ENCODE measurements at regions of chr9 and their contacts with region 1.

Region 1: GRCh38 chr9:33446946-33447798 is at the start of gene AQP3:
- DNase-seq: peak; percentile 80
- ATAC-seq: peak; percentile 78
- H3K4me3 Mint-ChIP-seq: peak within 1 kb of the TSS; percentile 89
- H3K27ac Mint-ChIP-seq: peak within 1 kb of the TSS; percentile 91
- H3K4me1 Mint-ChIP-seq: peaks cover 51% of the 10 kb centered on the region
- H3K27me3 Mint-ChIP-seq: no peaks in the 10 kb centered on the region
- total RNA-seq, gene AQP3: 29.9 to 31.4 TPM

Region 2: DNA sequence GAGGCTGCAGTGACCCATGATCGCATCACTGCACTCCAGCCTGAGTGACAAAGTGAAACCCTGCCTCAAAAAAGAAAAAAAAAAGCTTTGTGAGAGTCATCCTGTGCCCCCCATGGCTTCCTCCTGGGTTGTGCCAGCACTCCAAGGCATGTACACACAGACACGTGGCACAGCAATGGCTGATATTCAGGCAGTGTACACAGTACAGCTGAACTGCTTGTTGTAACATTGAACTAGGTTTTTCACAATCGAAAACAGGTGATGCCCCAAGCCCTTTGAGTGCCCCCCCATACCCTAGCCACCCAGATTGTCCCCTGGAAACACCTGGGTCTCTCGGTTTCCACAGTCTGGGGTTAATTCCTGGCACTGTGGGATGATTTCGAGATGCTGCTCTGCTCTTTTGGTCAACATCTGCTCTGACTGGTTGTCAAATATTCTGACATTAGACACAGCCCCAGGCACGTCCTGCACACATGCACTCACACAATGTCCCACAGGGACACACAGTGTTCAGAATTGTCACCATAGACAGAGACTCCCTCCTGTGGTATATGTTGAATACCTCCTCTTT is 198.0 kb before region 1 on chr9:
- CTCF ChIA-PET with region 1: no interaction called
- POLR2A ChIA-PET with region 1: no interaction called
- DNase-seq: no peak
- ATAC-seq: peak; percentile 20
- H3K4me3 Mint-ChIP-seq: no peak overlapping the region
- H3K27ac Mint-ChIP-seq: peak overlapping the region; percentile 32
- H3K4me1 Mint-ChIP-seq: peaks cover 10% of the 10 kb centered on the region
- H3K27me3 Mint-ChIP-seq: no peaks in the 10 kb centered on the region

Region 3: DNA sequence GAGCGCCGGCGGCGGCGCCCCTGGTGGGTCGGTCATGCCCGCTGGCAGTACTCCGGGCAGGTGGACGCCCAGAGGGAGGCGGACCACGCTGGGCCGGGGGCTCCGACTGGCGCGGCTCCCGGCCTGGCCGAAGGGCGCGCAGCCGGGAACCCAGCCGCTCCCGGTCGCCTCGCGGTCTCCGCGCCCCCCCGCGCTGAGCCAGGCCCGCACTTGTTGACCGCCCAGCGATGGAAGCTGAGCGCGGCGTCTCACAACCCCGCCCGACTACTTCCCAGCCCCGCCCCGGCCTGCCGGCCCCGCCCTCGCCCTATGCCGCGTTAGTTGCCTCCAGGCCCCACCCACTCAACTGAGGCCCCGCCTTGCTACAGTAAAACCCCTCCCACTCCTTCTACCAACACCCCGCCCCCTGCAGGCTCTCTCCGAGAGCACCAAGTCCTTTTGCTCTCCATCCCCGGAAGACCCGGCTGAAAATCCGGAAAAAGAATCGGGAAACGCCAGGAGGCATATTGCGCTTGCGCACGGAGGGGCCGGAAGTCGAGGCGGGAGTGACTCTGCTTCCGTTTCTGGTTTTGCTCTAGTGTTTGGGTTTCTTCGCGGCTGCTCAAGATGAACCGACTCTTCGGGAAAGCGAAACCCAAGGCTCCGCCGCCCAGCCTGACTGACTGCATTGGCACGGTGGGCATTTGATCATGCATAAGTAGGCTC is 182.5 kb before region 1 on chr9 and contains the starts of genes BAG1 and CHMP5:
- CTCF ChIA-PET with region 1: no interaction called
- POLR2A ChIA-PET with region 1: no interaction called
- DNase-seq: peak; percentile 100
- ATAC-seq: peak; percentile 90
- H3K4me3 Mint-ChIP-seq: peak within 1 kb of the TSS; percentile 99
- H3K27ac Mint-ChIP-seq: peak within 1 kb of the TSS; percentile 100
- H3K4me1 Mint-ChIP-seq: peaks cover 52% of the 10 kb centered on the region
- H3K27me3 Mint-ChIP-seq: no peaks in the 10 kb centered on the region
- total RNA-seq, gene BAG1: 95.5 to 96.3 TPM
- total RNA-seq, gene CHMP5: 83.0 to 85.5 TPM

Region 4: GRCh38 chr9:33374634-33375213 is 72.4 kb before region 1 on chr9:
- CTCF ChIA-PET with region 1: interaction called, 28 read pairs
- POLR2A ChIA-PET with region 1: interaction called, 5 read pairs
- DNase-seq: peak; percentile 81
- ATAC-seq: peak; percentile 85
- H3K4me3 Mint-ChIP-seq: no peak overlapping the region
- H3K27ac Mint-ChIP-seq: peak overlapping the region; percentile 35
- H3K4me1 Mint-ChIP-seq: peaks cover 12% of the 10 kb centered on the region
- H3K27me3 Mint-ChIP-seq: no peaks in the 10 kb centered on the region

Region 5: DNA sequence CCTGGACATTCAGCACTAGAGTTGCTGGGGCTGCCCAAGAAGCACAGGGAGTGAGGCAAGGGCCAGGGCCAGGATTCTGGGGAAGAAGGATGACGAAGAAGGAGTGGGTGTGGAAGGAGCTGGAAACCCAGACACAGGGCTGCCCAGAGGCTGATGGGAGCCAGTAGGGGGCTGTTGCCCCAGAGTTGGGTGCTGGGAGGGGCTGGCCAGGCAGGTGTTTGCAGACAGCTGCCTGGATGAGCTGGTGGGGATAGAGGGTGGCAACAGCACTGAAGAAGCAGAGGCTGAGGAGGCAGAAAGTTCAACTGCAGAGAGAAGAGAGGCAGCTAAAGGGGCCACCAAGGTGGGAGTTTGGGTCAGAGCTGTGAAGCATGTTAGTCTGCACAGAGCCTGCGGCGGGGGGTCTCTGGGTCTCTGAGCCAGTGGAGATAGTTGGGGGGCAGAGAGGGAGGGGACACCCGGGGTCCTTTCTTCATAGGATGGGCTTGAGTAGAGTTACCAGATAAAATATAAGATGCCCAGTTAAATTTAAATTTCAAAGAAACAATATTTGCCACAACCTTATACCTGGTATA is 42.3 kb before region 1 on chr9:
- CTCF ChIA-PET with region 1: interaction called, 209 read pairs
- POLR2A ChIA-PET with region 1: no interaction called
- DNase-seq: no peak
- ATAC-seq: no peak
- H3K4me3 Mint-ChIP-seq: no peak overlapping the region
- H3K27ac Mint-ChIP-seq: no peak overlapping the region
- H3K4me1 Mint-ChIP-seq: peaks cover 7% of the 10 kb centered on the region
- H3K27me3 Mint-ChIP-seq: peaks cover 5% of the 10 kb centered on the region

Region 6: GRCh38 chr9:33430942-33431341 is 16.2 kb before region 1 on chr9:
- CTCF ChIA-PET with region 1: interaction called, 10 read pairs
- POLR2A ChIA-PET with region 1: interaction called, 9 read pairs
- DNase-seq: no peak
- ATAC-seq: no peak
- H3K4me3 Mint-ChIP-seq: no peak overlapping the region
- H3K27ac Mint-ChIP-seq: no peak overlapping the region
- H3K4me1 Mint-ChIP-seq: peaks cover 3% of the 10 kb centered on the region
- H3K27me3 Mint-ChIP-seq: peaks cover 2% of the 10 kb centered on the region

Region 7: GRCh38 chr9:33458444-33458843 is 11.3 kb after region 1 on chr9:
- CTCF ChIA-PET with region 1: interaction called, 141 read pairs
- POLR2A ChIA-PET with region 1: interaction called, 9 read pairs
- DNase-seq: peak; percentile 57
- ATAC-seq: peak; percentile 60
- H3K4me3 Mint-ChIP-seq: peak overlapping the region; percentile 15
- H3K27ac Mint-ChIP-seq: peak overlapping the region; percentile 87
- H3K4me1 Mint-ChIP-seq: peaks cover 51% of the 10 kb centered on the region
- H3K27me3 Mint-ChIP-seq: no peaks in the 10 kb centered on the region

Region 8: GRCh38 chr9:33466565-33467495 is 19.7 kb after region 1 on chr9:
- CTCF ChIA-PET with region 1: interaction called, 141 read pairs
- POLR2A ChIA-PET with region 1: interaction called, 12 read pairs
- DNase-seq: peak; percentile 79
- ATAC-seq: peak; percentile 71
- H3K4me3 Mint-ChIP-seq: no peak overlapping the region
- H3K27ac Mint-ChIP-seq: peak overlapping the region; percentile 25
- H3K4me1 Mint-ChIP-seq: peaks cover 7% of the 10 kb centered on the region
- H3K27me3 Mint-ChIP-seq: no peaks in the 10 kb centered on the region

Region 9: DNA sequence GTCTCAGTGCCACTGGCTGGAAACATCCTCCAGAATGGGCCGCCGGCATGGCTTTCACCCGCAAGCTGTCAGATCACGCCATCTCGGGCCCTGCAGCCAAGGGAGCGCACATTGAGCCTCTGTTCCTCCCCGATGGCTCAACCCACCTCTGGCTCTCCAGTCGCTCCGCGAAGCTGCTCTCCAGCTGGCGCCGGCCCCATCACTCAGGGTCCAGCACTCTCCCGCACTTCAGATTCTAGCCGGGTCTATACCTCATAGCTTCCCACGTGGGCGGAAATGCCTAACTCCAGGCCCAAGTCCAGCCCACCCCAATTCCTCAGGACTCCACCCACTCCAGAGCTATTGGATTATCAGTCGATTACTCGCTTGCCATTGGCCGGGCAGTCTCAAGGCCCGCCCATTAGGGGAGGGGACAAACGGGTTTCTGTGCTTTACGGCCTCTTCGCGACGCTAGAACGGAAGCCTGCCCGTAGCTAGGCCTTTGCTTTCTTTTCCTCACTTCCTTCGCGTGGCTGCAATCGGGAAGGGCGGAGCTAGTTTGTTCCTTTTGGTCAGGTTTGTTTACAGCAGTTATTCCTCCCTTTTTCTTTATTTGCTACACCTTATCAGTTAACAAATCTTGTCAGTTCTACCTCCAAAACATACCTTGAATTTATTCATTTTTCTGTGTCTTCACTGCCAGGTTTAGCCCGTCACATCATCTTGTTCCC is 26.6 kb after region 1 on chr9 and contains the start of gene NOL6:
- CTCF ChIA-PET with region 1: interaction called, 141 read pairs
- POLR2A ChIA-PET with region 1: interaction called, 6 read pairs
- DNase-seq: peak; percentile 99
- ATAC-seq: peak; percentile 100
- H3K4me3 Mint-ChIP-seq: peak within 1 kb of the TSS; percentile 98
- H3K27ac Mint-ChIP-seq: peak within 1 kb of the TSS; percentile 95
- H3K4me1 Mint-ChIP-seq: peaks cover 28% of the 10 kb centered on the region
- H3K27me3 Mint-ChIP-seq: no peaks in the 10 kb centered on the region
- total RNA-seq, gene NOL6: 37.1 to 38.8 TPM

Measured in activated CD8-positive, alpha-beta T cell treated with anti-CD3 and anti-CD28 coated beads, Interleukin-2, amount 10 ng/mL, durations not matched to agents 7 days and 5 days (primary cell).